PC-3 (cell line): ENCODE measurements at regions of chr11 and their contacts with region 1.

Region 1: DNA sequence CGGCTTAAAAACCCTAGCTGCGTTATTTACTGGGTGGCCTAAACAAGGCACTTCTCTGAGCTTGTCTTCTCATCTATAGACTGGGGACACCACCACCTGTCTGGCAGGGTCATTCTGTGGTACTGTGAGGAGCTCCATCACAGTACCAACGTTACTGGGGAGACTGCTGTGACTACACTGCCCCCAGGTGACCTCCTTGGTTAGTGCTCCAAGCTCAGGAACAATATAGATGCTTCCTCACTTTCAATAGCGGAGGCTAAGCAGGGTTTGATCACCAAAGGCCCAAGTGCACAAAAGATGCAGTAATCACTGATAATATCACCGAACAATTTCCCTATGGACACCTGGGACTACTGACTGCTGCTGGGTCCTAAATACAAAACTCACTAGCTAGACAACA is 18.8 kb downstream of the PRPF19 start:
- DNase-seq: peak; percentile 79
- ATAC-seq: peak; percentile 98
- H3K4me3 ChIP-seq: no peak overlapping the region
- H3K27ac ChIP-seq: no peak overlapping the region
- H3K4me1 ChIP-seq: no peaks in the 10 kb centered on the region
- H3K27me3 ChIP-seq: no peaks in the 10 kb centered on the region
- CTCF ChIP-seq: peak; percentile 93

Region 2: GRCh38 chr11:60710482-60710881 is 177.1 kb before region 1 on chr11:
- CTCF ChIA-PET with region 1: no interaction called
- POLR2A ChIA-PET with region 1: no interaction called
- intact Hi-C with region 1: no loop called
- DNase-seq: peak; percentile 37
- ATAC-seq: peak; percentile 54
- H3K4me3 ChIP-seq: no peak overlapping the region
- H3K27ac ChIP-seq: no peak overlapping the region
- H3K4me1 ChIP-seq: no peaks in the 10 kb centered on the region
- H3K27me3 ChIP-seq: peaks cover 70% of the 10 kb centered on the region
- CTCF ChIP-seq: peak; percentile 55

Region 3: DNA sequence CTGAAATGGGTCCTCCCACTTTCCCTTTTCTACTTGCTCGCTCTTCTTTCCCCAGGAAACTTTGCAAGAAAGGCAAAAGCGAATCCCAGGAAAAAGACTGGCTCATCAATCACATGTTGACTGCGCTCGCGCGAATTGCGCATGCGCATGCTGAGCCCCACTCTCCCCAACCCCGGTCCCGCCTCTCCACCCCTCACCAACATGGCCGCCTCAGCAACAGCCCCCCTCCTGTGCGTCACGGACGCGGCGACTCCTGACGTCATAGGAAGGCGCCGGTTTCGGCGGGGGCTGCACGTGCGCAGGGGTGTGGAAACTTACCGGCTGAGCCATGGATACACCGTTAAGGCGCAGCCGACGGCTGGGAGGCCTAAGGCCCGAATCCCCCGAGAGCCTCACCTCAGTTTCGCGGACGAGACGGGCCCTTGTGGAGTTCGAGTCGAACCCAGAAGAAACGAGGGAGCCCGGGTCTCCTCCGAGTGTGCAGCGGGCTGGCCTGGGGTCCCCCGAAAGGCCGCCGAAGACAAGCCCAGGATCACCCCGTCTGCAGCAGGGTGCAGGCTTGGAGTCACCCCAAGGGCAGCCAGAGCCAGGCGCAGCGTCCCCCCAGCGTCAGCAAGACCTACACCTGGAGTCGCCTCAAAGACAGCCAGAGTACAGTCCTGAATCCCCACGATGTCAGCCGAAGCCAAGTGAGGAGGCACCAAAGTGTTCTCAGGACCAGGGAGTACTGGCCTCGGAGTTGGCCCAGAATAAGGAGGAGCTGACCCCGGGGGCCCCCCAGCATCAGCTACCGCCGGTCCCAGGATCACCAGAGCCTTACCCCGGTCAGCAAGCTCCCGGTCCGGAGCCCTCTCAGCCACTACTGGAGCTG is 45.5 kb before region 1 on chr11 and contains the start of gene CCDC86:
- CTCF ChIA-PET with region 1: interaction called, 10 read pairs
- POLR2A ChIA-PET with region 1: no interaction called
- intact Hi-C with region 1: loop called (anchors 1 kb)
- DNase-seq: peak; percentile 98
- ATAC-seq: peak; percentile 73
- H3K4me3 ChIP-seq: peak within 1 kb of the TSS; percentile 92
- H3K27ac ChIP-seq: peak within 1 kb of the TSS; percentile 59
- H3K4me1 ChIP-seq: peaks cover 31% of the 10 kb centered on the region
- H3K27me3 ChIP-seq: no peaks in the 10 kb centered on the region
- CTCF ChIP-seq: no peak
- total RNA-seq, gene CCDC86: 67.9 and 108 TPM in 2 replicates

Region 4: DNA sequence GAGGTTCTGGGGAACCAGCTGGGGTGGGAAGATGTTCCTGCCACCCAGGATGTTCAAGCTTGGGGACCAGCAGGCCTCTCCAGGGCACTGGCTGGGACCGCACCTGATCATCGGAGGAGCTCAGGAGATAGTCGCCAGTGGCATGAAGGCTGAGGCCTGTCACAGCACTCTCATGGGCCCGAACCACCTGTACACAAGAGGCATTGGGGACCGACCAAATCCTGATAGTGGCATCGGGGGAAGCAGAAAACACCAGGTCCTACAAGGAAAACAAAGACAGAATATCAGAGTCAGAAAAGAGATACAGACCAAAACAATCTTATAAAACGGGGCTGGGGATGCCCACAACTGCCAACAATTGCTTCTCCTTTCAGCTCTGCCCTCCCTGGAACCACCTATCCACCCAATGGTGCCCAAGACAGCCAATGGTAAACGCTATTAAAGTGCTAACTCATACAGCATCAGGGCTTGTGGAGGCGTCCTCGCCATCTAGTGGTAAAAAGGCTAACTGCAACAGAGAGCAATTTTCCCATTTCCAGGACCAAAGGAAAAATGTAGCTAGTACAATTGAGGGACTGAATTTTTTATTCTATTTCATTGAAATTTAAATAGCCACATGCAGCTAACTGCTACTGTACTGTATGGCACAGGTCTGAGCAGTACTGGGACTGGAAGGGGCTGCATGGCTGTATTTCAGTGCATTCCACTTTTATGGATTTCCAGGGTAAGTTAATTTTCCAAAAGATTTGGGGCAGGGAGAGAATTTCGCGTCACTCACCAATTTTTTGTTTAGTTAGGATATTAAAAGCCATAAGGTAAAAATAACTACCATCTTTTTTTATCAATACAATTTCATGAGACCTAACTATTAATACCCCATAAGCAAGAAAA is 11.7 kb after region 1 on chr11:
- CTCF ChIA-PET with region 1: interaction called, 18 read pairs
- POLR2A ChIA-PET with region 1: no interaction called
- intact Hi-C with region 1: no loop called
- DNase-seq: peak; percentile 89
- ATAC-seq: peak; percentile 96
- H3K4me3 ChIP-seq: no peak overlapping the region
- H3K27ac ChIP-seq: no peak overlapping the region
- H3K4me1 ChIP-seq: peaks cover 5% of the 10 kb centered on the region
- H3K27me3 ChIP-seq: no peaks in the 10 kb centered on the region
- CTCF ChIP-seq: peak; percentile 97